A673 (cell line): ENCODE measurements at regions of chr4 and their contacts with region 1.

Region 1: GRCh38 chr4:30962939-30963338 is 242.8 kb downstream of the PCDH7 start:
- DNase-seq: peak; percentile 53
- H3K4me3 ChIP-seq: no peak overlapping the region
- H3K27ac ChIP-seq: peak overlapping the region; percentile 95
- H3K4me1 ChIP-seq: peaks cover 75% of the 10 kb centered on the region
- H3K27me3 ChIP-seq: no peaks in the 10 kb centered on the region
- CTCF ChIP-seq: no peak

Region 2: GRCh38 chr4:31009926-31010325 is 47.0 kb after region 1 on chr4:
- CTCF ChIA-PET with region 1: no interaction called
- POLR2A ChIA-PET with region 1: no interaction called
- intact Hi-C with region 1: loop called (anchors 5 kb)
- DNase-seq: no peak
- H3K4me3 ChIP-seq: no peak overlapping the region
- H3K27ac ChIP-seq: no peak overlapping the region
- H3K4me1 ChIP-seq: peaks cover 74% of the 10 kb centered on the region
- H3K27me3 ChIP-seq: no peaks in the 10 kb centered on the region
- CTCF ChIP-seq: no peak

Region 3: DNA sequence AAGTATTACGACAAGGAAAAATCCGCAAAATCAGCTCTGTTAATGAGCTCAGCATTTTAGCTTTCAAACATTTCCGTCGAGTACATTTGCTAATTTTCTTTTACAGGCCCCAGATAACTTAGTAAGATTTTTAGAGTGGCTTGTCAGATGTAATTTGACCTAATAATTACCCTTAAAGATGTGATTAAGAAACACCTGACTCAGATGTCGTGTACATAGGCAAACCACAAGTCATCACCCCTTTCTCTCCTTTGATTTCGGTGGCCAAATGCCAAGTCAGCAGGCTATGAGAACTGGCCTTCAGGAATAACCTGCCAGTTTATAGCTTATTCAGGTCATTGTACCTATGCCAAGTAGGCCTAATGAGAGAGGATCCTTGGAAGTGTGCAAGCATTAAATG is 126.9 kb after region 1 on chr4:
- CTCF ChIA-PET with region 1: no interaction called
- POLR2A ChIA-PET with region 1: no interaction called
- intact Hi-C with region 1: loop called (anchors 5 kb)
- DNase-seq: peak; percentile 35
- H3K4me3 ChIP-seq: no peak overlapping the region
- H3K27ac ChIP-seq: no peak overlapping the region
- H3K4me1 ChIP-seq: peaks cover 56% of the 10 kb centered on the region
- H3K27me3 ChIP-seq: no peaks in the 10 kb centered on the region
- CTCF ChIP-seq: no peak

Region 4: GRCh38 chr4:31674313-31674947 is 711.5 kb after region 1 on chr4:
- CTCF ChIA-PET with region 1: no interaction called
- POLR2A ChIA-PET with region 1: no interaction called
- intact Hi-C with region 1: loop called (anchors 10 kb)
- DNase-seq: peak; percentile 54
- H3K4me3 ChIP-seq: no peak overlapping the region
- H3K27ac ChIP-seq: no peak overlapping the region
- H3K4me1 ChIP-seq: peaks cover 23% of the 10 kb centered on the region
- H3K27me3 ChIP-seq: no peaks in the 10 kb centered on the region
- CTCF ChIP-seq: peak; percentile 70